ENCODE measurements at regions of chr7 and their contacts with region 1.

Region 1: GRCh38 chr7:66740302-66740979 is at the start of gene RABGEF1:
- DNase-seq: peak; percentile 98
- ATAC-seq: peak; percentile 95 to 99 (median 98)
- H3K4me3 ChIP-seq: peak within 1 kb of the TSS; percentile 85 to 99 (median 98)
- H3K27ac ChIP-seq: peak within 1 kb of the TSS; percentile 86 to 99 (median 97)
- H3K4me1 ChIP-seq: peaks cover 2 to 36% (median 28%) of the 10 kb centered on the region in 9 donors
- H3K27me3 ChIP-seq: no peaks in the 10 kb centered on the region
- CTCF ChIP-seq: peak in 2 of 9 donors; percentile 15 to 17
- total RNA-seq, gene RABGEF1: 13.3 to 23.4 (median 17.4) TPM

Region 2: DNA sequence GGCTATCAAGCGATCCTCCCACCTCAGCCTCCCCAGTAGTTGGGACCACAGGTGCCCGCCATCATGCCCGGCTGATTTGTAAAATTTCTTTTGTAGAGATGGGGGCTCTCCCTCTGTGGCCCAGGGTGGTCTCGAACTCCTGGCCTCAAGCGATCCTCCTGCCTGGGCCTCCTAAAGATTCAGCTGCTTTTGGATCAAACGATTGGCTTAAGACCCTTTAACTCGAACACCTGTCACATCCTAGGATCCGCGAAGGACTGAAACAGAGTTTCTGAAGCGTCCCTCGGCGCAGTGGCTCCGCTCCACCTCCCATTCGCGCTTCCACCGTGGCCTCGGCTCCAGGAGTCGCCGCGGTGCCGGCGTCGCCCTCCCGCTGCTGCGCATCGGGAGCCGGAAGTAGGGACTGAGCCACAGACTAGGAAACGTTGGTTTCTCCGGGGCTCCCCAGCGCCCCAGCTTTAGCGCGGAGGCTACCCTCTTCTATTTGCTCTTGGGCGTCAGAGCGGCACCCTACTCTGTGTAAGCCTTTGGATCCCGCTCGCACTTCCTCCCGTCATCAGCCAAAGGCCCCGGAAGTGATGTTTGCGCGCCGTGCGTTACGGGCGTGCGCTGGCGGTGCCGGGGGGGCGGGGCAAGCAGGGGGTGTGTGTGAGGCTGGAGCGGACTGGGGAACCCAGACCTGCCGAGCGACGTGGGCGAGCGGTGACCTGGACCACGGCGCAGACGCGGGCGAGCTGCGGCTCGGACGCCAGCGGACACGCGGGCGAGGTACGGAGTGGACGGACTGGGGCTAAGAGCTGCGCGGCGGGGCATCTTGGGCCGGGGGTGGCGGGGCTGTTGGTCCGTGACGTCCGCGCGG is 58.7 kb before region 1 on chr7:
- intact Hi-C with region 1: loop called in 3 of 10 experiments (anchors 5 to 10 kb)
- DNase-seq: peak; percentile 96 to 97
- ATAC-seq: peak; percentile 98 to 99 (median 99)
- H3K4me3 ChIP-seq: peak overlapping the region; percentile 65 to 98 (median 86)
- H3K27ac ChIP-seq: peak overlapping the region; percentile 74 to 99 (median 94)
- H3K4me1 ChIP-seq: peaks cover 0 to 40% (median 18%) of the 10 kb centered on the region in 9 donors
- H3K27me3 ChIP-seq: no peaks in the 10 kb centered on the region
- CTCF ChIP-seq: no peak

Region 3: GRCh38 chr7:66844552-66845378 is 104.3 kb after region 1 on chr7:
- intact Hi-C with region 1: loop called in 2 of 10 experiments (anchors 2 to 10 kb)
- DNase-seq: peak; percentile 98 to 99
- ATAC-seq: peak; percentile 97 to 99 (median 99)
- H3K4me3 ChIP-seq: peak overlapping the region; percentile 69 to 99 (median 92)
- H3K27ac ChIP-seq: peak overlapping the region; percentile 83 to 98 (median 92)
- H3K4me1 ChIP-seq: peaks cover 0 to 19% (median 7%) of the 10 kb centered on the region in 9 donors
- H3K27me3 ChIP-seq: no peaks in the 10 kb centered on the region
- CTCF ChIP-seq: peak in 3 of 9 donors; percentile 26 to 30 (median 27)